Endothelial cell of umbilical vein (primary cell): ENCODE measurements at regions of chr10 and their contacts with region 1.

Region 1: GRCh38 chr10:6401562-6402348 is 178.3 kb downstream of the PRKCQ start:
- DNase-seq: peak; percentile 89
- H3K4me3 ChIP-seq: peak overlapping the region; percentile 23 to 80 (median 36)
- H3K27ac ChIP-seq: peak overlapping the region; percentile 86
- H3K4me1 ChIP-seq: peaks cover 6% of the 10 kb centered on the region
- H3K27me3 ChIP-seq: peaks cover 2 to 9% of the 10 kb centered on the region in 2 experiments
- CTCF ChIP-seq: peak; percentile 62 to 76
- POLR2A ChIP-seq: no peak

Region 2: DNA sequence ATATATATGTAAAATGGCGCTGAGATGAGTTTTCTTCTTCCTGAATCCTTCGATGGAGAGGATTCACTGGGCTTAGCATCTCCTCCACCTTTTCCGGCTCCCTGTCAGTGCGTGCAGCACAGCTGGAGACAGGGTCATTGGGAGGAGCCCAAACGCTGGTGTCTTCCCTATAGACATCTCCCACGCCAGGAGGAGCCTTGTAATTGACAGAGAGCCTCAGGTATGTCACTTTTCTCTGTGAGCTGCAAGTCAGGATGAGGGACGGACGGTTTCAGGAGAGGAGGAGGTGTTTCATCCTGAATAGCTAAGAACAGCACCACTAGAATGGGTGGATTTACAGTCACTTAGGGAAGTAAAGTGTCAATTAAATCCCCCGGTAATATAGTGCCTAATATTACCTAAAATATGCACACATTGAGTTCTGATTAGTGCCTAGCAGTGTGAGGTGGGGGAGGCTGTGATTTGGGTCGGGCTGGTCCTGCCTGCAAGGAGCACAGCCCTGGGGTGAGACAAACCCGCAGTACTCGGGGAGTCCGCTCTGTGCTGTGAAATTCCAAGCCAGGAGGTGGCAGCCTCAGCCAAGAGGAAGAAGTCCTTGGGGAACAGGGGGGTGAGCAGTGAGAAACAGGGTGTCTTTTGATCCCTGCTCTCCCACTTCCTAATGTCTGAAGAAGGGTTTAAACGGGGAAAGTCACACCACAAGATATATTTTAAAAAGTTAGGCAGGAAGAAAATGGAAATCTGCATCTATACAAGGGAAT is 452.6 kb before region 1 on chr10:
- CTCF ChIA-PET with region 1: interaction called, 13 read pairs
- POLR2A ChIA-PET with region 1: no interaction called
- dilution Hi-C with region 1: no loop called
- intact Hi-C with region 1: loop called (anchors 1 kb)
- DNase-seq: peak; percentile 82
- H3K4me3 ChIP-seq: no peak overlapping the region
- H3K27ac ChIP-seq: no peak overlapping the region
- H3K4me1 ChIP-seq: peaks cover 32% of the 10 kb centered on the region
- H3K27me3 ChIP-seq: no peaks in the 10 kb centered on the region
- CTCF ChIP-seq: peak; percentile 45 to 66
- POLR2A ChIP-seq: no peak

Region 3: GRCh38 chr10:6088721-6089390 is 312.9 kb before region 1 on chr10 and contains the start of gene RBM17:
- CTCF ChIA-PET with region 1: interaction called, 88 read pairs
- POLR2A ChIA-PET with region 1: interaction called, 6 read pairs
- dilution Hi-C with region 1: no loop called
- intact Hi-C with region 1: loop called (anchors 1 kb)
- DNase-seq: peak; percentile 97
- H3K4me3 ChIP-seq: peak within 1 kb of the TSS; percentile 59 to 85 (median 74)
- H3K27ac ChIP-seq: peak within 1 kb of the TSS; percentile 83
- H3K4me1 ChIP-seq: peaks cover 37% of the 10 kb centered on the region
- H3K27me3 ChIP-seq: no peaks in the 10 kb centered on the region
- CTCF ChIP-seq: peak; percentile 100
- POLR2A ChIP-seq: peak; percentile 83
- total RNA-seq, gene RBM17: 148 TPM in 2 replicates

Region 4: DNA sequence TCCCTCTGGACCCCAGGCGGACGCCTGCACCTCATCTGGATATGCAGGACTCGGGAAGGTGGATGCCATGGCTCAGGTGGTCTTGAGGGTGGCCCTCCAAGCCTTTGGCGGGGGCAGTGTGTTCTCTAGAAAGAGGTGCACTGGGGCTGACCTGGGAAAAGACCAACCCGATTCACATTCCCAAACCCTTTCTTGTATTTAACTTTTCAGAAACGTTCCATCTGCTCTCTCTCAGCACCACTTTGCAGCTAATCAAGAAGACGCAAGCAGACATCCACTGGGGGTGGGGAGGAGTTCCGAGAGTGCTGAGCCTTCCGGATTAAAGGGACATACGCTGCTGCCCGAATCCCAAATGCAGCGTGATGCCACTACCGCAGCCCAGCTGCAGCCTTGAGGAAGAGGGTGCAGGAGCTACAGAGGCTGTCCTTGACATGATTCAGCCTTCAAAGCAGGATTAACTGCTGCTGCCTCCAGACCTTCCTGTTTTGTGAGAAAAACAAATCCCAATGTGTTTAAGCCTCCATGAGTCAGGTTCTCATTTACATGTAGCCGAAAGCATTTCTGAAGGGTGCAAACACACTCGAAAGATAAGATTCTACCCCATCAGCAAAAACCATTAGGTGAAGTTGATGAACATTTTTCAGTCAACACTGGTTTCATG is 273.0 kb before region 1 on chr10:
- CTCF ChIA-PET with region 1: interaction called, 17 read pairs
- POLR2A ChIA-PET with region 1: no interaction called
- dilution Hi-C with region 1: no loop called
- intact Hi-C with region 1: no loop called
- DNase-seq: peak; percentile 29
- H3K4me3 ChIP-seq: no peak overlapping the region
- H3K27ac ChIP-seq: no peak overlapping the region
- H3K4me1 ChIP-seq: peaks cover 3% of the 10 kb centered on the region
- H3K27me3 ChIP-seq: peaks cover 0 to 2% of the 10 kb centered on the region in 2 experiments
- CTCF ChIP-seq: no peak
- POLR2A ChIP-seq: no peak

Region 5: GRCh38 chr10:6163364-6164270 is 238.1 kb before region 1 on chr10:
- CTCF ChIA-PET with region 1: interaction called, 21 read pairs
- POLR2A ChIA-PET with region 1: interaction called, 4 read pairs
- dilution Hi-C with region 1: no loop called
- intact Hi-C with region 1: no loop called
- DNase-seq: peak; percentile 86
- H3K4me3 ChIP-seq: peak overlapping the region; percentile 59 to 70 (median 69)
- H3K27ac ChIP-seq: peak overlapping the region; percentile 79
- H3K4me1 ChIP-seq: peaks cover 20% of the 10 kb centered on the region
- H3K27me3 ChIP-seq: no peaks in the 10 kb centered on the region
- CTCF ChIP-seq: no peak
- POLR2A ChIP-seq: peak; percentile 71

Region 6: DNA sequence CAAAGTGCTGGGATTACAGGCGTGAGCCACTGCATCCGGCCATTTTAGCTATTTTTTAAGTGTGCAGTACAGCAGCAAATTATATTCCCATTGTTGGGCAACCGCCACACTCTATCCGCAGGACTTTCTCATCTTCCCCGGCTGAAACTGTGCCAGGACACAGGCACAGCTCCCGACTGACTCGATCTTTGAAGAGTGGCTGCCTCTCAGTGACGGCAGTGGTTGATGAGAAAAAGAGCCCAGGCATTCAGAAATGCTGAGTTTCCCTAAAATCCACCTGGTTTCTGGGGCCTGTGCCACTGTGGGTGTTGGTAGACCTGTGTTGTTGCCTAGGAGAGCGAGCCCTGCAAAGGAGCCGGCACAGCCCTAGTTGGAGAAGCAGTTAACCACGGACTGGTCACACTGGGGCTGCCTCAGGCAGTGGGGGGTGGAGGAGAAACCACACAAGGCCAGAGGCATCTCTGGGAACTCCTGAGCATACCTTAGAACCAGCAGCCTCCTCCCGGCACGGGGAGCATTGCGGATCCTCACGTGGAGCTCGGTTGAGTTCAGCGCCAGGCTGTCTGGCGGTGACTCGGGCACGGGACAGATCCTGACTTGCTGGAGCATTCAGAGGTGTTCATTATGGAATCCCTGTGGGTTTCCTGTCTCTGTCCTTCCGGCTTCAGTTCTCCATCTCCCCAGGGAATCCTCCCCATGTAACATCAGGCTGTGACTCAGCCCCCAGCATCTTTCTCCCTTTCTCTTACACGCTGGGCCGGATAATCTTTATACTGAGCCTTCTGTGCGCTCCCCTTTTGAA is 182.9 kb before region 1 on chr10:
- CTCF ChIA-PET with region 1: interaction called, 14 read pairs
- POLR2A ChIA-PET with region 1: no interaction called
- dilution Hi-C with region 1: no loop called
- intact Hi-C with region 1: no loop called
- DNase-seq: no peak
- H3K4me3 ChIP-seq: no peak overlapping the region
- H3K27ac ChIP-seq: no peak overlapping the region
- H3K4me1 ChIP-seq: no peaks in the 10 kb centered on the region
- H3K27me3 ChIP-seq: no peaks in the 10 kb centered on the region
- CTCF ChIP-seq: no peak
- POLR2A ChIP-seq: no peak

Region 7: GRCh38 chr10:6320320-6321010 is 81.3 kb before region 1 on chr10:
- CTCF ChIA-PET with region 1: no interaction called
- POLR2A ChIA-PET with region 1: no interaction called
- dilution Hi-C with region 1: no loop called
- intact Hi-C with region 1: no loop called
- DNase-seq: no peak
- H3K4me3 ChIP-seq: no peak overlapping the region
- H3K27ac ChIP-seq: no peak overlapping the region
- H3K4me1 ChIP-seq: no peaks in the 10 kb centered on the region
- H3K27me3 ChIP-seq: no peaks in the 10 kb centered on the region
- CTCF ChIP-seq: no peak
- POLR2A ChIP-seq: no peak

Region 8: DNA sequence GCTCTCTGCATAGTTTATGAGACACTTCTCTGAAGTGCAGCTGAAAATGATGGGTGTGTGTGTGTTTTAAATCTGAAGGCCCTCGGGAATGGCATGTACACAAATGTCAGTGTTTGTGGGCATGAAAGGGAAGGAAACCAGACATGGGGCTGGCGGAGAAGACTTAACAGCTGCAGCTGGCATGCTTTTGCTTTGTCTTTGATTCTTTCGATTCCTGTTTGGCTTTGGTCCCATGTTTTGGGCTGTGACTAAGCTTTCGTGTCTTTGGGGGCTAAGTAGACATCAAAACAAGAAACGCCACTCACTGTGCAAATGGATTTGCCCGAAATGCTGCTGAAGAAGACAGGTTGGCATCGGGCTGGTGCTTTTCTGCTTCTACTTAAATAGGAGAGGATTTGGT is 19.7 kb before region 1 on chr10:
- CTCF ChIA-PET with region 1: interaction called, 20 read pairs
- POLR2A ChIA-PET with region 1: no interaction called
- dilution Hi-C with region 1: no loop called
- intact Hi-C with region 1: no loop called
- DNase-seq: peak; percentile 84
- H3K4me3 ChIP-seq: no peak overlapping the region
- H3K27ac ChIP-seq: no peak overlapping the region
- H3K4me1 ChIP-seq: peaks cover 8% of the 10 kb centered on the region
- H3K27me3 ChIP-seq: no peaks in the 10 kb centered on the region
- CTCF ChIP-seq: no peak
- POLR2A ChIP-seq: no peak